Tibial artery (tissue), 4 donors: ENCODE measurements at regions of chr4 and their contacts with region 1.

Region 1: DNA sequence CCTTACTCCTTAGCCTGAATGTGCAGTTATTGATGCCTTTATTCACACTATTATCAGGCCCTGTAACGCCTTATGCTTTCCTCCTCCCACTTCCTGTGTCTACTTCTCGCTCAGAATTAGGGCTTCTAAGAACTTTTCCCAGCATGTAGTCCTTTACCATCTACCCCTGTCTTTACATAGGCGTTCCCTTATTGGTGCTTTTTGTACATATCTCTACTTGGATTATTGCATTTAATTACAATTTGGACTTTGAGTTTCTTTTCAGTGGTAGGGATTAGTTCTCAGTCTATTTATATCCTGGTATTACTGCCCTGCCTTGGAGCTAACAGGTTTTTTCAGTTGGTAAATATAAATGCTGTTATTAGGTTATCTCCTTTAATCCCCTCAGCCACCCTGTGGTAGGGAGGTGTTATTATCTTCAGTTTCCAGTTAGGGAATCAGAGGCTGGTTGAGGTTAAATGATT is 84.0 kb downstream of the RBPJ start:
- DNase-seq: no peak
- H3K4me3 ChIP-seq: no peak overlapping the region
- H3K27ac ChIP-seq: no peak overlapping the region
- H3K4me1 ChIP-seq: peaks cover 0 to 4% (median 0%) of the 10 kb centered on the region in 4 donors
- H3K27me3 ChIP-seq: no peaks in the 10 kb centered on the region
- CTCF ChIP-seq: no peak

Region 2: GRCh38 chr4:25986807-25987206 is 418.0 kb before region 1 on chr4:
- intact Hi-C with region 1: loop called (anchors 5 kb)
- DNase-seq: no peak
- H3K4me3 ChIP-seq: no peak overlapping the region
- H3K27ac ChIP-seq: no peak overlapping the region
- H3K4me1 ChIP-seq: peaks cover 0 to 8% (median 2%) of the 10 kb centered on the region in 4 donors
- H3K27me3 ChIP-seq: no peaks in the 10 kb centered on the region
- CTCF ChIP-seq: no peak

Region 3: DNA sequence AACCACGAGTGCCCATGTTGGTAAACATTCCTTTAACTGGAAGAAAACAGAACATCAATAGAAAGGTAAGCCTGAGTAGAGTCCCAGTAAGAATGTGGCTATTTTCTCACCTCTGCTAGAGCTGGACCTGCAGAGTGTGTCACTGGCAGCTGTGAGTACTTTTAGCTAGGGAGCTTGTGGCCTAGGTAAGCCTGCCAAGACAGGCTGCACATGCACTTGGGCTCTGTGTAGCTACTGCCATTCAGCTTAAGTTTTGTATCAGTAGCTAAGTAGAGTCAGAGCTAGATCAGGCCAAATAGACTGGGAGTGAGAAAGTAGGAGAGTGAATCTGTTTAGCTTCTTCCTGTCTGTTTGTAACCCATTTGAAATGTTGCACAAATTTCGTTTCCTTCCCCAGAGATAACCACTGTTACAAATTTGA is 48.7 kb before region 1 on chr4:
- intact Hi-C with region 1: loop called (anchors 10 kb)
- DNase-seq: no peak
- H3K4me3 ChIP-seq: no peak overlapping the region
- H3K27ac ChIP-seq: no peak overlapping the region
- H3K4me1 ChIP-seq: peaks cover 0 to 7% (median 2%) of the 10 kb centered on the region in 4 donors
- H3K27me3 ChIP-seq: no peaks in the 10 kb centered on the region
- CTCF ChIP-seq: no peak